CD4-positive, alpha-beta T cell (primary cell): ENCODE measurements at regions of chr2 and their contacts with region 1.

Region 1: DNA sequence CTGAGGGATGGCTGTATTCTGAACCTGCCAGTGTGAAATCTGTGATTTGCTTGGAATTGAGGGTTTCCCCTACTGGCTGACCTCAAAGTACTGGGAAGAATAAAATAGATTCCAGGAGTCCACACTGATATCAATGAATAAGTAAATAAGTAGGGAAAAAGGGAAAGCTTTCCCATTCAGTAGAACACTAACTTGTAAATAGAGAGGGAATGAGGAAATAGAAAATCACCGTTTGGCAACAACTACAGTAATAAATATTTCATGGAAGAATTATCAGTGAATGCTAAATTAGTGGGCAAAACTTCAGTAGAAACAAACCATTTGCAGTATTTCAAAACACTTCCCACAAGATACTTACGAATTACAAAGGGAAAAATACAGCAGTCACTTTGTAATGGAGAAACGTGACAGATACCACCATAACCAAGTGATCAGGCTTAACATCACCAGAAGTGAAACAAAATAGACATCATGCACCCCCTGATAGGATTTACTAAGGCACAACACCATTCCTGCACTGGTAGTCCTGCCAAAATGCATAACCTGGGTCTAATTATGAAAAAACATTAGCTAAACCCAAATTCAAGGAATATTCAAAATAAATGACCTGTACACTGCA is 88.5 kb downstream of the ICA1L start:
- DNase-seq: no peak
- ATAC-seq: no peak
- H3K4me3 ChIP-seq: no peak overlapping the region
- H3K4me3 Mint-ChIP-seq: no peak overlapping the region
- H3K27ac ChIP-seq: no peak overlapping the region
- H3K27ac Mint-ChIP-seq: no peak overlapping the region
- H3K4me1 ChIP-seq: no peaks in the 10 kb centered on the region
- H3K4me1 Mint-ChIP-seq: peaks cover 6% of the 10 kb centered on the region
- H3K27me3 ChIP-seq: no peaks in the 10 kb centered on the region
- H3K27me3 Mint-ChIP-seq: no peaks in the 10 kb centered on the region
- CTCF ChIP-seq: no peak

Region 2: DNA sequence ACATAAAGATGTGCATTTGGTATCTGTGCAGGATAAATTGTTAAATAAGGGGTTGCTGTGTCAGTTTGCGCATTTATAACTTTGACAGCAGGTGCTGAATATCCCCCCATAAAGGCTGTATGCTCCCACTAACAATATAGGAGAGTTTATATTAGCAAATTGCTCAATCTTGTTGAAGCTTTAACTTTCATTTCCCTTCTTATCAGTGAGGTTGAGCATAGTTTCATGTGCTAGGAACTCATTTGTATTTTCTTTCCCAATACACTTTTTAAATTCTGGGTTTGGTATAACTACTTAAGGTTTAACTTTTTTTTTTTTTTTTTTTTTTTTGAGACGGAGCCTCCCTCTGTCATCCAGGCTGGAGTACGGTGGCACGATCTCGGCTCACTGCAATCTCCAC is 59.3 kb before region 1 on chr2:
- CTCF ChIA-PET with region 1: no interaction called
- POLR2A ChIA-PET with region 1: no interaction called
- intact Hi-C with region 1: no loop called
- DNase-seq: no peak
- ATAC-seq: no peak
- H3K4me3 ChIP-seq: no peak overlapping the region
- H3K4me3 Mint-ChIP-seq: no peak overlapping the region
- H3K27ac ChIP-seq: no peak overlapping the region
- H3K27ac Mint-ChIP-seq: no peak overlapping the region
- H3K4me1 ChIP-seq: no peaks in the 10 kb centered on the region
- H3K4me1 Mint-ChIP-seq: peaks cover 58% of the 10 kb centered on the region
- H3K27me3 ChIP-seq: no peaks in the 10 kb centered on the region
- H3K27me3 Mint-ChIP-seq: no peaks in the 10 kb centered on the region
- CTCF ChIP-seq: no peak

Region 3: DNA sequence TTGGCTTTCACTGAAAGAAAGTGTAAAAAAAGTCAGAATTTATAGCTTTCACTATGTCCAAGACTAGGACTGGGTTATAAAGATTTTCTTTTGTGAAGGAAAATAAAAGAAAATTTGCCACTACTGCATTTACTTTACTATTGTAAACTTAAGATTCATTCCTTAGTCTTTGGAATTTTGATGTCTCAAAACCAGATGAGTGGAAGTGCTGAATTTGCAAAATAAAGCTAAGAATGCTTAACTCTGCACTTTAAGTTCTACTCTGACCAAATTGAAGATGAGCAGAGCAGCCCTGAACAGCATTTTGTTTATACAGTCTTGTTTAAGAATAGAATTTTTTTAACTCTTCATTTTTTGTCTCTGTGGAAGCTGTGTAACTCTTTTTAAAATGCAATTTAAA is 13.8 kb before region 1 on chr2:
- CTCF ChIA-PET with region 1: no interaction called
- POLR2A ChIA-PET with region 1: no interaction called
- intact Hi-C with region 1: loop called in 1 of 2 experiments (anchors 1 kb)
- DNase-seq: no peak
- ATAC-seq: no peak
- H3K4me3 ChIP-seq: no peak overlapping the region
- H3K4me3 Mint-ChIP-seq: no peak overlapping the region
- H3K27ac ChIP-seq: no peak overlapping the region
- H3K27ac Mint-ChIP-seq: no peak overlapping the region
- H3K4me1 ChIP-seq: no peaks in the 10 kb centered on the region
- H3K4me1 Mint-ChIP-seq: peaks cover 29% of the 10 kb centered on the region
- H3K27me3 ChIP-seq: no peaks in the 10 kb centered on the region
- H3K27me3 Mint-ChIP-seq: no peaks in the 10 kb centered on the region
- CTCF ChIP-seq: no peak